Motor neuron (in vitro differentiated cells): ENCODE measurements at regions of chr15 and their contacts with region 1.

Region 1: DNA sequence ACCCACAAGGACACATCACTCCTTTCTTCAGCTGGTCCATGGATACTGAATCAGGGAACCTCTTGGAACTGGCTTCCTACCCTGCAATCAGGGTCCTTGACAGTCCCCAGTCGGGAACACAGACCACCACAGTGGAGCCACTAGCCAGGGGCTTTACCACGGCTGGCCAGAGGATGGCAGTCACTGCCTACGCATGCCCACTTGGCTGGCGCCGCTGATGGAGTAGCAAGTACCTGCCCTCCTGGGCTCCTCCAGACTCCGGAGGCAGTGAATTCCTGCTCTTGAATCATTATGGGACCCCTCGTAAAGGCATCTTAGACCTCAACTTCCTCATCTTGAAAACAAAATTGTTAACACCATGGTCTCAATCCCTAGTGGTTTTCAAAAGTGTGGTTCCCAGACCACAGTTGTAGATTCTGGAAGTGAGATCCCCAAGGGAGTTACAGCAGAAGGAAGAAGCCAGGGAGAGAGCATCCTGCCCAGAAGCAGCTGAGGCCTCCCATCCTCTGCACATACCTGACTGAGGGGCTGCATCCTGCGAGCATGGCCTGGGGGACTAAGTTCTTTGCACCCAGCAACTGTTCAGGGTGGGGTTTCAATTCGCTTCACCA is 9.1 kb upstream of the SKIC8 start:
- ATAC-seq: peak; percentile 70 to 97 (median 88)
- H3K4me3 ChIP-seq: no peak overlapping the region
- H3K27ac ChIP-seq: no peak overlapping the region
- H3K4me1 ChIP-seq: peaks cover 13 to 19% of the 10 kb centered on the region in 2 donors

Region 2: DNA sequence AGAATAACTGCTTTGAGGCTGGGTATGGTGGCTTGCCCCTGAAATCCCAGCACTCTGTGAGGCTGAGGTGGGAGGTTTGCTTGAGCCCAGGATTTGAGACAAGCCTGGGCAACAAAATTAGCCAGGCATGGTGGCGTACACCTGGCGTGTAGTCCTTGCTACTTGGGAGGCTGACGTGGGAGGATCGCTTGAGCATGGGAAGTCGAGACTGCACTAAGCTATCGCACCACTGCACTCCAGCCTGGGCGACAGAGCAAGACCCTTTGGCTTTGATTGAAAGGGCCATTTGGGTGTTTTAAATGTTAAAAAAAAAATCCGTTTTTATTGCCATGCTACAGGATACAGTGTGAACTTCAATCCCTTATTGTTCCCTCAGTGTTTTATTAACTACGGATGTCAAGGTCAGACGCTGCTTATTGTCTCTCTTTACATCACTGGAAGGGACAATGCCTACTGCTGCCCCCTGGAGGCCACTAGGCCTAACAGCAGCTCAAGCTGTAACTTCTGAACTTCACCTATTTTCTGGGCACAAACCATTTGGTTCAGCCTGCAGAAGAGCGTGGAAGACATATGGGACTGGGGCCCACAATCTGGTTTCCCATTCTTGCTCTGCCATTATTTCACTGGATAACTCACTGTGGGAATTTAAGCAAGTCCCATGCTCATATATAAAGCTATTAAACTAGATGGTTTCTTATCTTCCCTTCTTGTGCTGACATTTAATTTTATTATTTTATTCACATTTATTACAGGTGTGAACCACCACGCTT is 114.2 kb after region 1 on chr15:
- in situ Hi-C with region 1: loop called in 7 of 9 experiments (anchors 10 to 25 kb)
- ATAC-seq: peak; percentile 42 to 86 (median 59)
- H3K4me3 ChIP-seq: no peak overlapping the region
- H3K27ac ChIP-seq: no peak overlapping the region
- H3K4me1 ChIP-seq: peaks cover 5 to 7% of the 10 kb centered on the region in 2 donors

Region 3: DNA sequence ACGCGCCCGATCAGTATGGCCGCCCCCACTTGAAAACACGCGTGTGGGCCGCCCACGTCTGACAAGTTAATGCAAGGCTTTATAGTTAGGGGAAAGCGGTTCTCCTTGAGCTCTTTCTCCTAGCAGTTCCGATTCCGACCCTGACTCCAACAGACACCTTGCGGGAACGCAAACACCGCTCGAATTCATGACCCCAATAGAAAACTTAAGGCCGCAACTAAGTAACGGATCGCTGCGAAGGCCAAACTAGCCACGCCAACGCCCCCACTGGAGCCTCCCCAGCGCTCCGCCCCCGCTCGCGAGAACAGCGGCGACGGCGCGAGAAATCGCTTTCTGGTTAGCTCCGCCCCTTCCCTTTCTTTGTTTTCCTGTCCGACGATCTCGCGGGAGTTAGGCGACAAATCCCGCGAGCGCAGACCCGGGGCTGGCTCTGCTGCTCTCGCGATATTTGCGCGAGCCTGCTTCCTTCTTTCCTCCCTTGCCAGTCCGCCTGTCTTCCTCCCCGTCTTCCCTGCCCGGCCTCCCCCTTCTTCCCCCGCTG is 129.3 kb after region 1 on chr15 and contains the start of gene IREB2:
- in situ Hi-C with region 1: loop called in 2 of 9 experiments (anchors 10 kb)
- ATAC-seq: peak; percentile 85 to 96 (median 93)
- H3K4me3 ChIP-seq: peak within 1 kb of the TSS; percentile 73 to 93 (median 86)
- H3K27ac ChIP-seq: peak within 1 kb of the TSS; percentile 95 to 96
- H3K4me1 ChIP-seq: peaks cover 12 to 22% of the 10 kb centered on the region in 2 donors
- total RNA-seq, gene IREB2: 27.1 to 74.6 (median 33.3) TPM

Region 4: GRCh38 chr15:79015416-79015815 is 706.9 kb after region 1 on chr15:
- in situ Hi-C with region 1: no loop called
- ATAC-seq: no peak
- H3K4me3 ChIP-seq: no peak overlapping the region
- H3K27ac ChIP-seq: no peak overlapping the region
- H3K4me1 ChIP-seq: no peaks in the 10 kb centered on the region

Region 5: DNA sequence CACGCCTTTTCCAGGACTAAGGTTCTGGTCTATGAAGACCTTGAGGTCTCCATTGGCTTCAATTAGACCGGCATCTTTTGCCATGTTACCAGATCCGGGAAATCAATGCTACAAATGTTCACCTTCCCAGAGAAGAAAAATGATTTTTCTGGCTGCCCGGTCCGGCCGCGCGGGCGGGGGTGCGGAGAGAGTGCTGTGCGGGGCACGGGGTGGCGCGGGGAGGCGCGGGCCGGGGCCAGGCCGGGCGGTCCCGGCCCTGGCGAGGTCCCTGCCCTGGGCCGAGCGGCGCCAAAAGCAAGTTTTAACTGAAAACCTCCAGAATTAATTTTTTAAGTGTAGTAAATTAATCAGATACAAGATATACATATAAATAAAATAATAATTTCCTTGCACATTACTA is 1251.9 kb after region 1 on chr15:
- in situ Hi-C with region 1: no loop called
- ATAC-seq: no peak
- H3K4me3 ChIP-seq: no peak overlapping the region
- H3K27ac ChIP-seq: no peak overlapping the region
- H3K4me1 ChIP-seq: peaks cover 10 to 19% of the 10 kb centered on the region in 2 donors